AG04449 (cell line): ENCODE measurements at regions of chr7 and their contacts with region 1.

Region 1: DNA sequence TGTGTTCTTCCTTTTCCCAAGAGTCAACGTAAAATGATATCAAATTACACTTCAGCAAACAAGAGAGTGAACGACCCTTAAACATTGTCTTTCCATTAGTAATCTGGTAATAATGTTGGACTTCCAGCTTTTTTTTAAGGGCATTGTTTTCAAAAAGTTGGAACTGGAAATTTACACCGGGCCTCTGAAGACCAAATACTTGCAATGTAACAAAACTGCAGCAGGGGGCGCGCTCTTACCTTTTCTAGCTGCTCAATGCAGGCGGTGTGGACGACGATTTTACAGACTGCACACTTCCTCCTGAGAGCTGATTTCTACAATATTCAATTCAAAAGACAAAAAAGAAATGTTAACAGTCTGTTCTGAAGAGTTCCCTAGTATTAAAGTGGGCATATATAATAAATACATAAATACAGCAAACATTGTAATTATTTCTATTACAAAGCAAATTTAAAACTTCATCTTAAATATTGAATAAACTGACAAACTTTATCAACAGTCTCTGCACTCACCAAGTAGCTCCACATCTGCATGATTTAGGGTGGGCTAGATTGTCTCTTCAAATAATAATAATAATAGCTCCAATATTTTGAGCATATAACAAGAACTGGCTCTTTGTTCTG is 190.4 kb downstream of the DGKI start:
- DNase-seq: no peak
- H3K4me3 ChIP-seq: no peak overlapping the region
- CTCF ChIP-seq: peak; percentile 83

Region 2: GRCh38 chr7:137626469-137627067 is 29.8 kb before region 1 on chr7:
- CTCF ChIA-PET with region 1: interaction called, 23 read pairs
- POLR2A ChIA-PET with region 1: no interaction called
- DNase-seq: no peak
- H3K4me3 ChIP-seq: no peak overlapping the region
- CTCF ChIP-seq: peak; percentile 79

Region 3: GRCh38 chr7:137681657-137682562 is 25.6 kb after region 1 on chr7:
- CTCF ChIA-PET with region 1: interaction called, 13 read pairs
- POLR2A ChIA-PET with region 1: interaction called, 3 read pairs
- DNase-seq: peak; percentile 65
- H3K4me3 ChIP-seq: no peak overlapping the region
- CTCF ChIP-seq: no peak

Region 4: GRCh38 chr7:137753954-137754851 is 97.9 kb after region 1 on chr7:
- CTCF ChIA-PET with region 1: no interaction called
- POLR2A ChIA-PET with region 1: no interaction called
- DNase-seq: no peak
- H3K4me3 ChIP-seq: no peak overlapping the region
- CTCF ChIP-seq: no peak

Region 5: DNA sequence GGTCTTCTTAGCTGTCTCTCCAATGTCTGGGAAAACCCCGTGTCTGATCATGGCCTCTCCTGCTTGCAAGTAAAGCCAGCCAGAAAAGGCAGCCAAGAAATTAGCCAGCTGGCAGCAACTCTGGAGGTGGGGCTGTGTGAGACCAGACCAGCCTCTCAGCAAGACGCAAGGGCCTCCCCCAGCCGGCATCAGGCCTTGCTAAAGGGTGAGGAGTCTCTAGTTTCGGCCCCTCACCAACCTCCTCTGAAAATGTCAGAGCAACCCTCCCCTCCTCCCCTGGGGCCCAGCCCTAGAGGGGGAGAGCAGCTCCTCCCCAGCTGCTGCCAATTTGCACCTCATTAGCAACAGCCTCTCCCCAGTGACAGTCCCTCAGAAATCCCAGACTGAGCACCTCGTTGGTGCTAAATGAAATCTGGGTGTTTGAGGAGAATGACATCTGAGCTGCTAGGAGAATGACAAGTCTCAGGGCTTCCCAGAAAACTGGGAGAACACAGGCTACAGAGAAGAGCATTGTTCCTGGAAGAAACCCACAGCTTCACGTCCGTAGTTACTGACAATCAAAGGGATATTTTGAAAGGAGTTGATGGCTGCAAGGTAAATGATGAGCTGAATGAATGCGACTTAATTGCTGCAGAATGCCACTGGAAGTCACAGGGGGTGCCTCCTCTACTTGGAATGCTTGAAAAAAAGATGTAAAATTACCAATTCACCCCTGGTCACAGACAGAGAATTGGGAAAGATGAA is 164.5 kb after region 1 on chr7:
- CTCF ChIA-PET with region 1: interaction called, 18 read pairs
- POLR2A ChIA-PET with region 1: no interaction called
- DNase-seq: peak; percentile 47
- H3K4me3 ChIP-seq: no peak overlapping the region
- CTCF ChIP-seq: no peak

Region 6: DNA sequence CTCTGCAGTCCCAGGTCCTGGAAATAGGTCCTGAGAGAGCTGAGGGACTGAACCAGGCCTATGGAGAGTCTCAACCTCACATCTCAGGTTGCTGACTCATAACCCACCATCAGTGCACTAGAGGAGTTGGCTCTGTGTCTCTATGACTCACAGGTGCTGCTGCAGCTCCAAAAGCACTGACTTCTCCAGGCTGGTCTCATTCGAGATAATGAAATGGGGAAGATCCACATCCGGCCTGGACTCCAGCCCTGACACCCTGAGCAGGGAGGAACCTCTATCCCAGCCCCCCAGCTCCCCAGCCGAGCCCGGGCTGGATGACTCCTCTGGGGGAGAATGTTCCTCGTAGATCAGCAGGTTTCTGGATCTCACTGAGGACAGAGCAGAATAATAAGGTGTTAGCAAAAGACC is 225.9 kb after region 1 on chr7:
- CTCF ChIA-PET with region 1: interaction called, 55 read pairs
- POLR2A ChIA-PET with region 1: no interaction called
- DNase-seq: peak; percentile 98
- H3K4me3 ChIP-seq: no peak overlapping the region
- CTCF ChIP-seq: no peak

Region 7: DNA sequence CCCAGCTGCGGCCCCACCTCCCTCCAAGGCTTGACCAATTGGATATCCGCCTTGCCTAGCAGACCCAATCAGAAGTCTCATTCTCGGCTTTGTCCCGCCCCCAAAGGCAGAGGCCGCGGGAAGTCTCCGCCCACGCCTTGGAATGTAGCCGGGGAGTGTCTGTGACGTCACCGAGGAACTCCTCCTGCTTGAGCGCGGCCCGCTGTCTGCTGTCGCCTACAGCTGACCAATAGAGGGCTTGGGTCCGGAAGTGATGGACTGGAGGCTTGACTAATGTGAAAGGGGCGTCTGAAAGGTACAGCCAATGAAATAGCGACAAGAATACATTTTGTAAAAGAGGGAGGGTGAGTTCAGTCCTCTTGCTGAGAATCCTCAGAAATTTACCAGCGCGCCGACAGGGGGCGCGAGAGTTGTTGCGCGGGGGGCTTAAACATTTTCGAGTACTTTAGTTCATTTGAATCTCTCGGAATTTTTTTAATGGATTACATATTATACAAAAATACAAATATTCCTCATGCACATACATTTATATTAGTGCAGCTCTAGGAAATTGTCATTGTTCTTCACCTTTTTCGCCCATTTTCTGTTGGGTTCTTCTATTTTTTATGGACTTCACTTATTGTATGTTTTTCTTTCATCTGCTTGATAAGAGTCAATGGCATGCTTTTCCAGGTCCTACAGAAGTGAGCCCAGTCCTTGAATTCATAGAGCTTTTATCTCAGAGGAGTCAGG is 345.9 kb after region 1 on chr7:
- CTCF ChIA-PET with region 1: interaction called, 48 read pairs
- POLR2A ChIA-PET with region 1: no interaction called
- DNase-seq: peak; percentile 99
- H3K4me3 ChIP-seq: peak overlapping the region; percentile 97
- CTCF ChIP-seq: peak; percentile 70